PC-9 (cell line): ENCODE measurements at regions of chr6 and their contacts with region 1.

Region 1: DNA sequence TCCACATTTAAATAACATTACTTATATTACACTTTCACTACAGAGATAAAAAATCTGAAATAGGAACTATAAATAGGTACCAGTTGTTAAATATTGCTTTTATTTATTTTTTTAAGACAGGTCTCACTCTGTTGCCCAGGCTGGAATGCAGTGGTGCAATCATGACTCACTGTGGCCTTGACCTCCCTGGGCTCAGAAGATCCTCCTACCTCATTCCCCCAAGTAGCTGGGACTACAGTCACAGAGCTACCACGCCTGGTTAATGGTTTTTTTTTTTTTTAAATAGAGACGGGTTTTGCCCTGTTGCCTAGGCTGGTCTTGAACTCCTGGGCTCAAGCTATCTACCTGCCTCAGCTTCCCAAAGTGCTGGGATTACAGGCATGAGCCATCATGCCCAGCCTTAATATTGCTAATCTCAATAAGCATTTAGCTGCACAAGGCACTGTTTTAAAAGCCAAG is 17.3 kb downstream of the EEF1E1 start:
- DNase-seq: peak; percentile 81 to 87
- H3K4me3 ChIP-seq: no peak overlapping the region
- H3K27ac ChIP-seq: peak overlapping the region; percentile 72
- H3K4me1 ChIP-seq: peaks cover 58% of the 10 kb centered on the region
- H3K27me3 ChIP-seq: no peaks in the 10 kb centered on the region
- CTCF ChIP-seq: no peak

Region 2: DNA sequence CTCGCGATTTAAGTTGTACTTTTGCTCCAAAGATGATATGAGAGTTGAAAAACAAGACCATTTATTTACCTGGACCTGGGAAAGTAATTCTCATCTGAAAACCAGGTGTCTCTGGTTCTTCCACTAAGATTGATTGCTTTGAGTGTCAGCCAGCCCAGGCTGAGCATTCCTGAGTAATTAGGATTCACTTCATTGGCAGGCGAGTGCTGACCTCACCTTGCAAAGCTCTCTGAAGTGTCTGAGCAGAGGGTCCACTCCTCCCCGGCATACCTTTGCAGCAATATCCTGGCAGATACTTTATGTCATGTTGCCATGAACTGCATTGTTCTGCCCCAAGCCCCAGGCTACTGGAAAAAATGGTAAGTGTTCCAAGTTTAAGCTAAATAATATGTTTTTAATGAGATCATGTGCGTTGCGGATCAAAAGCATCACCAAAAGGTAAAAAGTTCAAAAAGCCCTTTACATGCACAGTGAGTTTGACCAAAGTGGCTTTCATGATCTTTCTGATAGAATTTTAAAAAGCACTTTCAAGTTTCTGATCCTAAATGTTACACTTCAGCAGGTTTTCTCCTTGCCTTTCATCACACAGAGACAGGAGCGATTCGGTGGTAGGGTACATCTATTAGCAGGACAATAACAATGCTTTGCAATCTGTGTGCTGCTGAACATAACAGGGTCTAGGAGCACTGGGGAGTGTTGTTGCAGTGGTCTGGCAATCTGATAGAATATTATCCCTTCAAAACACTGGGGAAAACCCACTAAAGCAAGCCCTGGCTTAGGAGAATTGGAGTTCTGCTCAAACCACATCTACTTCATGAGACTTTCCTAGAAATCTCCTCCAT is 145.1 kb after region 1 on chr6:
- CTCF ChIA-PET with region 1: no interaction called
- POLR2A ChIA-PET with region 1: no interaction called
- intact Hi-C with region 1: no loop called
- DNase-seq: peak; percentile 31 to 45
- H3K4me3 ChIP-seq: no peak overlapping the region
- H3K27ac ChIP-seq: no peak overlapping the region
- H3K4me1 ChIP-seq: no peaks in the 10 kb centered on the region
- H3K27me3 ChIP-seq: no peaks in the 10 kb centered on the region
- CTCF ChIP-seq: no peak

Region 3: GRCh38 chr6:8435160-8435852 is 350.2 kb after region 1 on chr6 and contains the start of gene SLC35B3:
- CTCF ChIA-PET with region 1: no interaction called
- POLR2A ChIA-PET with region 1: interaction called, 4 read pairs
- intact Hi-C with region 1: loop called (anchors 10 kb)
- DNase-seq: peak; percentile 68 to 97
- H3K4me3 ChIP-seq: peak within 1 kb of the TSS; percentile 91
- H3K27ac ChIP-seq: peak within 1 kb of the TSS; percentile 48
- H3K4me1 ChIP-seq: peaks cover 10% of the 10 kb centered on the region
- H3K27me3 ChIP-seq: no peaks in the 10 kb centered on the region
- CTCF ChIP-seq: no peak
- total RNA-seq, gene SLC35B3: 12.4 and 16.7 TPM in 2 replicates